ENCODE measurements at regions of chr21 and their contacts with region 1.

Region 1: DNA sequence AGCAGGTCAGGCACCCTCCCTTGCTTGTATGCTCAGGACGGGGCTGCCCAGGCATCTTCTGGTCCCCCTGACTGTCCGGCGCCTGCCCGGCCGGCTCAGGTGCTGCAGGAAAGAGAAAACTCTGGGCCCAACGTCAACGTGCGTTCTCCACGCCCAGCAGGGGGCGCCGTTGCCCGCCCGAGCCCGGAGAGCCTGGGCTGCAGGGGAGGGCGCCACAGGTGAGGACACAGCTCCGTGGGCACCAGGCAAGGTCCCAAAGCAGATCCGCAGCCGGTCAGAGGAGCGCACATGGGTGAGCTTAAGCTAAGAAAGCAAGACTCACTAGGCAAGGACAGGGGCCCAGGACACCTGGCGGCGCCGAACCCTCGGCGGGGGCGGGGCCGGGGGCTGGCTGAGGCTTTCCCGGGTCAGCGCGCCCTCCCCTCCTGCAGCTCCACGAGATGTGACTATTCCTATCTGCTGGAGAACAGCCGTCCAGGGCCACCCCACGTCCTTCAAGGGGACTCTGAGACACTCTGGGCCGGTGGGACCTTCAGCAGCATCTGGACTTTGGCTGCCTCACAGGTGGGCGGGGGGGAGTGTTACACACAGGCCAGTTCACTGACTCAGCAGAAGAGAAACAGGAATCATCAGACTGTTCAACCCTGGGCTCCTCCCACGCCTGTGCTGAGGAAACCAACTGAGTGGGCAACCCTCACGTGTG is 29.3 kb downstream of the KRTAP10-1 start:
- DNase-seq: peak in 2 of 5 donors; percentile 43 to 46
- H3K4me3 ChIP-seq: no peak overlapping the region
- H3K27ac ChIP-seq: no peak overlapping the region
- H3K4me1 ChIP-seq: peaks cover 1% of the 10 kb centered on the region
- H3K27me3 ChIP-seq: no peaks in the 10 kb centered on the region
- CTCF ChIP-seq: peak in 1 of 3 donors; percentile 19
- EP300 ChIP-seq: no peak
- POLR2A ChIP-seq: no peak

Region 2: GRCh38 chr21:44397431-44398031 is 113.1 kb before region 1 on chr21:
- intact Hi-C with region 1: no loop called
- DNase-seq: peak in 1 of 5 donors; percentile 17
- H3K4me3 ChIP-seq: no peak overlapping the region
- H3K27ac ChIP-seq: no peak overlapping the region
- H3K4me1 ChIP-seq: no peaks in the 10 kb centered on the region
- H3K27me3 ChIP-seq: no peaks in the 10 kb centered on the region
- CTCF ChIP-seq: no peak
- EP300 ChIP-seq: no peak
- POLR2A ChIP-seq: no peak

Region 3: GRCh38 chr21:44492567-44493385 is 17.9 kb before region 1 on chr21:
- intact Hi-C with region 1: loop called in 1 of 4 experiments (anchors 2 kb)
- DNase-seq: no peak
- H3K4me3 ChIP-seq: no peak overlapping the region
- H3K27ac ChIP-seq: no peak overlapping the region
- H3K4me1 ChIP-seq: no peaks in the 10 kb centered on the region
- H3K27me3 ChIP-seq: no peaks in the 10 kb centered on the region
- CTCF ChIP-seq: no peak
- EP300 ChIP-seq: no peak
- POLR2A ChIP-seq: no peak

Region 4: DNA sequence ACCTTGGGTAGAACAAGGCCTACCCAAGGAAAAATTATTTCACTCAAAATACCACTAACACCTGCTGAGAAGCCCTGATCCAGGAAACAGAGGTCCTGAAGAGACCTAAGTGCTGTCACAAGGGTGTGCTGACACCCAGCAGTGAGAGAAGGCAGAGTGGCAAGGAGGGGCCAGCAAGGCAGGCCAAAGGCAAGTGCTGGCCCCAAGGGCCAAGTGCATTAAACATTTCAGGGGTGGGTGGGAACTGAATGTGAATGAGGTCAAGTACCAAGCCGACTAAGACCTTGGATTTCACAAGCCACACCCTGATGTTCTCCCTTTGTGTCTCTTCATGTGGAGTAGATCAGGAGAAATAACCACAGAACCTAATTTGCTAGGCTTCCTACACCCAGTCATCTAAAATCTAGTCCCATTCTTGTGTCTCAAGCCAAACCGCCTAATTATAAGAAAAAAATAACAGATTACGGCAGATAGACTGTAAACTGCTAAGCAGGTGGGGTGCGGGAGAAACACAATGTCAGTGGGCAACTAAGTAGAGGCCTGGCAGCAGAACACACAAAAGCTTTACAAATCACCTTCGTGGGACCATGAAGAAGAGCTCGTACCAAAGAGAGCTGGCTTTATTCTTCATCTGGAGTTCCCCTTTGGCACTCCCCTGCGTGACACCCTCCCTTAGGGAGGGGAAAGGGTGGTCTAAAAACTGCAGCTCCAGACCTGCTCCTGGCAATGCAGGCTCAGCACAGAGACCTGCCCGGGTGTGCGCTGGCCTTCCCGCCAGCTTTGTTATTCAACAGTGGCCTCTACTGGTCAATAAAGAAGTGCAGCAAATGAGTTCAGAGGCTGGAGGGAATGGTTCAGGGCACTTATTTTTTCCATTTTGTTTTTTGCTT is 282.3 kb after region 1 on chr21:
- intact Hi-C with region 1: loop called in 2 of 4 experiments (anchors 10 kb)
- DNase-seq: peak; percentile 31 to 57 (median 52)
- H3K4me3 ChIP-seq: no peak overlapping the region
- H3K27ac ChIP-seq: no peak overlapping the region
- H3K4me1 ChIP-seq: peaks cover 3% of the 10 kb centered on the region
- H3K27me3 ChIP-seq: no peaks in the 10 kb centered on the region
- CTCF ChIP-seq: peak; percentile 33 to 57 (median 52)
- EP300 ChIP-seq: no peak
- POLR2A ChIP-seq: no peak

Measured in ovary (tissue), 10 donors.